CD4-positive, alpha-beta T cell (primary cell): ENCODE measurements at regions of chr20 and their contacts with region 1.

Region 1: DNA sequence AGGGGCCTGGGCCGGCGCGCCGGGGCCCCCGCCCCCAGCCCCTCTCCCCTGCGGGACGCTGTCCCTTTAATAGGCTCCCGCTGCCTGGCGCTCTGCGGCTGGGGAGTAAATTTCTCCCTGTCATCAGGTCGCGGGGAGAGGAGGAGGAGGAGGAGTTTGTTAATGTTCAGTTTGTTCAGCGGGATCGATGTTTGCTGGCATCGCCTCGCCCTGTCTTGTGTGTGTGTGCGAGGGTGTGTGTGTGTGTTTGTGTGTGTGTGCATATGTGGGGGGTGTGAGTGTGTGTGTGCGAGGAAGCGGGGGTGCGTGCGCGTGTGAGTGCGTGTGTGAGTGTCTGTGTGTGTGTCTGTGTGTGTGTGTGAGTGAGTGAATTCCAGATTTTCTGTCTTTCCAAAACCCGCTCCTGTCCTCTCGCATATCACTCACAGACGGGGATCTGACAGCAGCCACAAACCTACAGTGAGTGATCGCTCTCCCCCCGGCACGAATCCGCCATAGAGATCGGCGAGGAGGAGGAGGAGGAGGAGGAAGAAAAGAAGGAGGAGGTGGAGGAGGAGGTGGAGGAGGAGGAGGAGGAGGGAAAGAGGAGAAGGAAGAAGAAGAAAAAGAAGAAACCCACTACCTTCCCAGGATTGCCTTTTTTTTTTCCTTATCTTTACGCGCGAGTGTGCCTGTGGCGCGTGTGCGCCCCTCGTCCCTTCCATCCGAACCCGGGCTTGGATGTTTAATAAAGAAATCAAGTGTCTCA is at the start of gene TSHZ2:
- DNase-seq: peak; percentile 39 to 76 (median 56)
- ATAC-seq: peak; percentile 50
- H3K4me3 ChIP-seq: peak within 1 kb of the TSS; percentile 77
- H3K4me3 Mint-ChIP-seq: peak within 1 kb of the TSS; percentile 95
- H3K27ac ChIP-seq: peak within 1 kb of the TSS; percentile 81 to 85
- H3K27ac Mint-ChIP-seq: peak within 1 kb of the TSS; percentile 89
- H3K4me1 ChIP-seq: peaks cover 5% of the 10 kb centered on the region
- H3K4me1 Mint-ChIP-seq: peaks cover 48% of the 10 kb centered on the region
- H3K27me3 ChIP-seq: peaks cover 0 to 8% of the 10 kb centered on the region in 2 experiments
- H3K27me3 Mint-ChIP-seq: peaks cover 6% of the 10 kb centered on the region
- CTCF ChIP-seq: no peak
- total RNA-seq, gene TSHZ2: 26.1 to 27.4 TPM

Region 2: GRCh38 chr20:53077373-53078205 is 105.2 kb after region 1 on chr20:
- CTCF ChIA-PET with region 1: no interaction called
- POLR2A ChIA-PET with region 1: interaction called, 3 read pairs
- intact Hi-C with region 1: loop called in 1 of 2 experiments (anchors 5 kb)
- DNase-seq: no peak
- ATAC-seq: no peak
- H3K4me3 ChIP-seq: no peak overlapping the region
- H3K4me3 Mint-ChIP-seq: no peak overlapping the region
- H3K27ac ChIP-seq: no peak overlapping the region
- H3K27ac Mint-ChIP-seq: no peak overlapping the region
- H3K4me1 ChIP-seq: peaks cover 10% of the 10 kb centered on the region
- H3K4me1 Mint-ChIP-seq: peaks cover 34% of the 10 kb centered on the region
- H3K27me3 ChIP-seq: no peaks in the 10 kb centered on the region
- H3K27me3 Mint-ChIP-seq: no peaks in the 10 kb centered on the region
- CTCF ChIP-seq: no peak